HCT116 (cell line): ENCODE measurements at regions of chr10 and their contacts with region 1.

Region 1: DNA sequence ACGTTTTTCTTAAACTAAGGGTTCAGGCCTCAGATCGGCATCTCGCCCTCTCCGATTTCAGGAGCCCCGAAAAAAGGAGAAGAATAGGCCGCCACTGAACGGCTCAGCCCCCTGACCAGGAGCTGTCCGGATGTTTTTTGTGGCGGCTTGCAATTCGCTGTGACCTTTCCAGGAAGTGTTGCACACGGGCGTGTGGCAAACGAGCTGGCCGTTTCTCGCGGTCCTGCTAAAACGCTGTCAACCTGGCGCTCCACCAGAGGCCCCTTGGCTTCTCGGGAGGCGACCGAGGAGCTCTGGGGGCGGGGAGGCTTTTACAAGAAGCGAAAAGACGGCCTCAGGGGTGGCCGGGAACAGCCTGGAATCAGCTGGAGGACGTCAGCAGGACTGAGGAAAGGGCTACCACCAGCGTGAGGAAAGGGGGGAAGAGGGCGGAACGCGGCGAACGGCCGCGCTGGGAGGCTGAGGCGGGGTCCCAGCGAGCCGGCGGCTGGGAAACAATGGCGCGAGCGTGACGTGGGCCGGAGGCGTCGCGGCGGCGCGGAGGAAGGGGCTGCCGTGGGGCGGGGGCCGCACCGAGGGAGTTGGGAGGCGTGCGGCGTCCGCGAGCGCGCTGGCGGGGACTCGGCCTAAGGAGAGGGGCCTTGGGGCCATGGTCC is 493 bp downstream of the NT5C2 start:
- DNase-seq: peak; percentile 55
- ATAC-seq: peak; percentile 58
- H3K4me3 ChIP-seq: peak overlapping the region; percentile 80 to 91
- H3K27ac ChIP-seq: peak overlapping the region; percentile 86
- H3K4me1 ChIP-seq: peaks cover 35 to 41% of the 10 kb centered on the region in 2 experiments
- H3K27me3 ChIP-seq: no peaks in the 10 kb centered on the region
- CTCF ChIP-seq: no peak
- POLR2A ChIP-seq: no peak
- RAD21 ChIP-seq: peak; percentile 20; the same call in 1 of the 2 replicates

Region 2: GRCh38 chr10:103181244-103181643 is 11.3 kb before region 1 on chr10:
- CTCF ChIA-PET with region 1: no interaction called
- POLR2A ChIA-PET with region 1: interaction called, 17 read pairs
- RAD21 ChIA-PET with region 1: no interaction called
- intact Hi-C with region 1: no loop called
- DNase-seq: no peak
- ATAC-seq: no peak
- H3K4me3 ChIP-seq: no peak overlapping the region
- H3K27ac ChIP-seq: no peak overlapping the region
- H3K4me1 ChIP-seq: peaks cover 8 to 13% of the 10 kb centered on the region in 2 experiments; a peak in 2 of 4 replicates
- H3K27me3 ChIP-seq: no peaks in the 10 kb centered on the region
- CTCF ChIP-seq: no peak
- POLR2A ChIP-seq: no peak
- RAD21 ChIP-seq: no peak

Region 3: DNA sequence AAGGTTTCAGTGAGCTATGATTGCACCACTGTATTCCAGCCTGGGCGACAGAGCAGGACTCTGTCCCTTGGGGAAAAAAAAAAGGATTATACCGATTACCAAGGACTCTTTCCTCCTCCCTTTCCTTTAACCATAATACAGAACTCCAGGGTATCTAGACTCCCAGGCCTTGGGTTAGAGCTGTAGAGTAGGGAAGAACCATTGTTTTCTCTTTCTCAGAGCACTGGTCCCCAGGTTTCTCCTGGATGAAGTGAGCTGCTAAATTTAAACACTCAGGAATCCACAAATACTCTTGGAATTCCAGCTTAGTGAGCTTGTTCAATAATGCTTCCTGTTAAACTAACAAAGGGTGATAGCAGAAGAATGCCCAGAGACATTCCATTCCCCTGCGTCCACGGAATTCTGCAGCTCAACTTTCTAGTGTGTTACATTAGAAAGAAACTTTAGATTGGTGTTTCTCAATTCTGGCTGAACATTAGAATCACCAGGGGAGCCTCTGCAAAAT is 38.5 kb after region 1 on chr10:
- CTCF ChIA-PET with region 1: interaction called, 4 read pairs
- POLR2A ChIA-PET with region 1: interaction called, 34 read pairs
- RAD21 ChIA-PET with region 1: no interaction called
- intact Hi-C with region 1: no loop called
- DNase-seq: peak; percentile 49
- ATAC-seq: peak; percentile 65
- H3K4me3 ChIP-seq: peak overlapping the region; percentile 2 to 38; a peak in 3 of 4 replicates
- H3K27ac ChIP-seq: peak overlapping the region; percentile 89
- H3K4me1 ChIP-seq: peaks cover 53 to 75% of the 10 kb centered on the region in 2 experiments
- H3K27me3 ChIP-seq: no peaks in the 10 kb centered on the region
- CTCF ChIP-seq: no peak
- POLR2A ChIP-seq: no peak
- RAD21 ChIP-seq: no peak; the same call in 1 of the 2 replicates

Region 4: DNA sequence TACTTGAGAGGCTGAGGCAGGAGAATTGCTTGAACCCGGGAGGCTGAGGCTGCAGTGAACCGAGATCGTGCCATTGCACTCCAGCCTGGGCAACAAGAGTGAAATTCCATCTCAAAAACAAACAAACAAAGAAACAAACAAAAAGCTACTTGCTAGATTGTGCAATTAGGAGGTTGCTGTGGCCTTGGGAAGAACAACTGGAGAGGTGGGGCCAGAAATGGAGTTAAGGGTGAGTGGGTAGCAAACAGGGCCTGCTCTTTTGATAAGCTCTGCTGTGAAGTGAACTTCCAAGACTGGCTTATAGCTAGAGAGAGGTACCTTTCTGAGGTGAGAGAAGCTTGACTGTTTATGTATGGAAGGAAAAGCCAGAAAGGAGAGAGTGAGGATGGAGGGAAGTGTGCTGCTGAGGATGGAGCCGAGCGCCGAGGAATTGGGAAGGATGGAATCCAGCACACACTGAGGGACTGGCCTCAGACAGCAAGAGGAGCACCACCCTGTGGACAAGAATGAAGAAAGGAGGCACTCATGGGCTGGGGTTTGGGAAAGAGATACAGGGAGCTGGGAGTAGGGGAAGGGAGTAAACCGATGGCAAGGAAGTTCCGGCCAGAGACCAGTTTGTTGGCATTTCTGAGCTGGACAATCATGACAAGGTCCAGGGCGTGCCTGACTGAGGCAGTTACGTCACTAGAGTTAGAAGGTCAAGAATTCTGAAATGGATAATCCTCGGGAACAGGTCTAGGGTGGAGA is 46.1 kb after region 1 on chr10:
- CTCF ChIA-PET with region 1: interaction called, 11 read pairs
- POLR2A ChIA-PET with region 1: interaction called, 34 read pairs
- RAD21 ChIA-PET with region 1: interaction called, 3 to 4 read pairs
- intact Hi-C with region 1: loop called (anchors 2 kb)
- DNase-seq: peak; percentile 84
- ATAC-seq: peak; percentile 80
- H3K4me3 ChIP-seq: peak overlapping the region in 1 of 2 experiments; percentile 4; a peak in 1 of 4 replicates
- H3K27ac ChIP-seq: peak overlapping the region; percentile 44
- H3K4me1 ChIP-seq: peaks cover 44 to 52% of the 10 kb centered on the region in 2 experiments
- H3K27me3 ChIP-seq: no peaks in the 10 kb centered on the region
- CTCF ChIP-seq: peak in 2 of 3 experiments; percentile 60; a peak in 4 of 6 replicates
- POLR2A ChIP-seq: no peak
- RAD21 ChIP-seq: no peak